AG04450 (cell line): ENCODE measurements at regions of chr12 and their contacts with region 1.

Region 1: DNA sequence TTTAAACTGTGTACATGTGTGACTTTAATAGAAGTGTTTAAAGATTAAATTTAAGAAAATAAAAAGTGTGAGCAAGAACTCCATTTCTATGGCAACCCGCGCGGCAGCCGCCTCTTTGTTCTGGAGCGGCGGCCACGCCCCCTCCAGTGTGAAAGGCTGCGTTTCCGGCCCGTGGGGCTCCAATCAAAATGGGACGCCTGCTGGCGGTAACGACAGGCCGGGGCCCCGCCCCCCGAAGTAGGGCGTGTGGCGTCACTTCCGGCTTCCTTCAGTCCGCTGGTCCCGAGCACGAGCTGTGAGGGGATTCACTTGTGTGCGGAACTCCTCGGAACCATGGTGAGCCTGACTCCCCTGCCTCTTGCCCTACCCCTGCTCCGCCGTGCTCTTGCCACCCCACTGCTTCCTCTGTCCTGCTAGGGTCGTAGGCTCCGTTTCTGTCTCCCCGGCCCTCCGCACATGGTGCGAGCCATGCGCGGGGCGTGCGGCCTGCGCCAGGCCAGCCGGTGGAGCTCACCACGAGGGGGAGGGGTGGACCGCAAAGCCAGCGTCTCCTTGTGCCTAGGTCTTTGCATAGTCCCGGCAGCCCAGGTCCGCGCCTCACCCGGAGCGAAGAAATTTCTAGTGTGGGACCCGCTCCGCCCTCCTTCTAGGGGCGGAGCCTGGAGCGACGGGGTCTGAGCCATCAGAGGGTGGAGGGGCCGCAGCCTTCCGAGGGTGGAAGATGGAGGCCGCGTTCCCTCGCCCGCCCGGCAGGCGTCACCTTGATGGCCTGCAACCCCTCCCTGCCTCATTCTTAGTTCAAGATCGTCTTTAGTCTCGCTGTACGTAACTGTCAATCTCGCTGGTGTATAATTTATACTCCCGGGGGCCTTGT is at the start of gene CCT2:
- DNase-seq: peak; percentile 85
- H3K4me3 ChIP-seq: peak within 1 kb of the TSS; percentile 100
- H3K27ac ChIP-seq: peak within 1 kb of the TSS; percentile 97
- H3K27me3 ChIP-seq: no peaks in the 10 kb centered on the region
- CTCF ChIP-seq: peak; percentile 60
- polyA plus RNA-seq, gene CCT2: 256 and 284 TPM in 2 replicates

Region 2: GRCh38 chr12:69388371-69388770 is 197.1 kb before region 1 on chr12:
- CTCF ChIA-PET with region 1: interaction called, 13 read pairs
- POLR2A ChIA-PET with region 1: interaction called, 3 read pairs
- DNase-seq: peak; percentile 50
- H3K4me3 ChIP-seq: no peak overlapping the region
- H3K27ac ChIP-seq: no peak overlapping the region
- H3K27me3 ChIP-seq: no peaks in the 10 kb centered on the region
- CTCF ChIP-seq: peak; percentile 73

Region 3: DNA sequence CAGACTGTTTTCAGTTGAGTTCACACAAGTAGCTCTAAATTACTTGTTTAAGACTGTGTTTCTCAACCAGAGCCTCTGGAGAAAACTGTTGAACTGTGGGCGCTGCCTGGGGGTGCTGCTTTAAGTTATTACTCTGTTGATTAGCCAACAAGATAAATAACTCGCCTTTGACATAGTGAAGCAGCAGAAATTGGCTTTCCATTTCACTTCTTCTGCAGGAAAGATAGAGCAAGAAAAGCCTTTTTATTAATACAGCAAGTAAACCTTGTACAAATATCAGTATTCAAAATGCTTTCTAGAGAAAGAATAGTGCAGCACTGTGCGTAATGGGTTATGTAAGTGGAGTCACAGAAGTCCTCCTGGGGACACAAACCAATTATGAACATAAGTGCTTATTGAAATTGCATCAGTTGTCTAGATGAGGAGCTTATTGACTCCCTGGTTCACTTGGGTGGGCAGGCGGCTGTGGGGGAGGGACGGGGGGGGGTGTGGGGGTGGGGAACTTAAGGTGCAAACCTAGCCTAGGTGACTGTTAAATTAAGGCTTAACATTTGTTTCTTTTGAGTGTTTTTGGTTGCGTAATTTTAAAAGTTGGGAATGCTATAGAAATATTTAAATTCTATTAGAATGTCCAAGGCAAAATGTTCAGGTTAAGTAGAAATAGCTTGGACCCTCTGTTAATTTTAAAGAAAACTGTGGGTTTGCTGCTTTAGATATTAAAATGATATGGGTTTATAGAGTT is 109.0 kb before region 1 on chr12:
- CTCF ChIA-PET with region 1: no interaction called
- POLR2A ChIA-PET with region 1: no interaction called
- DNase-seq: no peak
- H3K4me3 ChIP-seq: no peak overlapping the region
- H3K27ac ChIP-seq: no peak overlapping the region
- H3K27me3 ChIP-seq: no peaks in the 10 kb centered on the region
- CTCF ChIP-seq: no peak

Region 4: GRCh38 chr12:69553627-69554248 is 31.7 kb before region 1 on chr12:
- CTCF ChIA-PET with region 1: interaction called, 4 read pairs
- POLR2A ChIA-PET with region 1: interaction called, 13 read pairs
- DNase-seq: no peak
- H3K4me3 ChIP-seq: no peak overlapping the region
- H3K27ac ChIP-seq: no peak overlapping the region
- H3K27me3 ChIP-seq: no peaks in the 10 kb centered on the region
- CTCF ChIP-seq: no peak

Region 5: DNA sequence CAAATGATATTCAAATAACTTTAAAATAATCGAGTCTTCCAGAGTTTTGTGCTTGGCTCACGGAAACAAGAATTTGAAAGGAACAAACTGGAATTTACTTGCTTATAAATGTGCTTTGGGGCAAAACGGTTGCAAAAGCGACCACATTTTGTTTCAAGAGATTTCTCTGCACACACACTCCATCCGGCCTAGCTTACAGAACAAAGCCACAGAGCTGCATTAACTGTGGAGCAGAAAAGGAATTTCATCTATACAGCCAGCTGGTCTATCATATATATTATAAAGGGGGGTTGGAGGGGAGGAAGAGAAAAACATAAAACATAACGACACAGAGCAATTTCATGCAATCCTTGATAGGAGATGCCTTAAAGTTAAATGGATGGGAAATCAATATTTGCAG is 392.6 kb after region 1 on chr12:
- CTCF ChIA-PET with region 1: no interaction called
- POLR2A ChIA-PET with region 1: no interaction called
- DNase-seq: no peak
- H3K4me3 ChIP-seq: no peak overlapping the region
- H3K27ac ChIP-seq: no peak overlapping the region
- H3K27me3 ChIP-seq: peaks cover 9% of the 10 kb centered on the region
- CTCF ChIP-seq: no peak